Panc1 (cell line): ENCODE measurements at regions of chr20 and their contacts with region 1.

Region 1: GRCh38 chr20:43725666-43726065 is 1.1 kb downstream of the GTSF1L start:
- DNase-seq: no peak
- ATAC-seq: no peak
- H3K4me3 ChIP-seq: no peak overlapping the region
- H3K27ac ChIP-seq: no peak overlapping the region
- H3K4me1 ChIP-seq: no peaks in the 10 kb centered on the region
- H3K27me3 ChIP-seq: no peaks in the 10 kb centered on the region
- CTCF ChIP-seq: no peak

Region 2: GRCh38 chr20:43938932-43939761 is 213.5 kb after region 1 on chr20:
- CTCF ChIA-PET with region 1: no interaction called
- POLR2A ChIA-PET with region 1: interaction called, 10 read pairs
- in situ Hi-C with region 1: no loop called
- intact Hi-C with region 1: no loop called
- DNase-seq: peak; percentile 81
- ATAC-seq: peak; percentile 82
- H3K4me3 ChIP-seq: no peak overlapping the region
- H3K27ac ChIP-seq: peak overlapping the region; percentile 86
- H3K4me1 ChIP-seq: peaks cover 81% of the 10 kb centered on the region
- H3K27me3 ChIP-seq: no peaks in the 10 kb centered on the region
- CTCF ChIP-seq: no peak